ENCODE measurements at regions of chr6 and their contacts with region 1.

Region 1: DNA sequence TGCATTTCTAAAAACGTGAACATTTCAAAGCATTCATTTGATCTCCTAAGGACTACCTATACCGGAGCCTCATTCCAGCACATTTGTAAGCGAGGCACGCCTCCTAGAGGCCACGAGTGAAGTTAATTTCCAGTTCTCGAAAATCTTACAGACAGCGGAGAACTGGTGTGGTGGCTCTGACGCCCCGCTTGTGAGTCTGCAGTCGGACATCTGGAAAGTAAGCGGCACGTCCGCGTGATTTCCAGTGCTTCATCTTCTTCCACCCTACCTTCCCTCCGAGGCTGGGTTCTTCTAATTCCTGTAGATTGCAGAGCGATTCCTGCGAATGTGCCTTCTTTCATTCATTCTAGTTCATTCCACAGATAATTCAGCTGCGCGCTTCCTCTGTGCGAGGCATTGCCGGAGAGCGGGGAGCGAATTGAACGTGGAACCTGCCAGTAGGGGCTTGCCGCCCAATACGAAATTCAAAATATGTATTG is 810 bp upstream of the PRIM2 start:
- DNase-seq: peak; percentile 66
- ATAC-seq: peak; percentile 86
- H3K4me3 Mint-ChIP-seq: peak overlapping the region; percentile 97
- H3K27ac Mint-ChIP-seq: peak overlapping the region; percentile 89
- H3K4me1 Mint-ChIP-seq: peaks cover 18% of the 10 kb centered on the region
- H3K27me3 Mint-ChIP-seq: peaks cover 9% of the 10 kb centered on the region
- CTCF ChIP-seq: peak; percentile 40

Region 2: DNA sequence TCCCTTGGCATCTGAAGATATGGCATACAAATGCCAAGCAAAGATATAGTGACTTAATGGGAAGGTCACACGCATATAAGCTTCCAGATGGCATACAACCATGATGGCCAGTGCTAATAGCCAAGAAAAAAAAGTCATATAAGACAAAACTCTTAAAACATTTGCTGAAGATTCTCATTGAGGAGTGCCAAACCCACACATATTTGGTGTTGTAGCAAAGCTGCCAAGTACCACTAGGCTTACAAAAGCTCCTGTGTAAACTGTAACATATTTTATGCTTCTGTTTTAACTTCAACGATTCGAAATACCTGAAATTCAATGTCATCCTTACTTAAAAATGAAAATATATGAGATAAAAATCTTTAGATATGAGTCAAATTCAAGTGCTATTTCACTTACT is 1860.6 kb before region 1 on chr6:
- CTCF ChIA-PET with region 1: no interaction called
- POLR2A ChIA-PET with region 1: no interaction called
- intact Hi-C with region 1: no loop called
- DNase-seq: no peak
- ATAC-seq: no peak
- H3K4me3 Mint-ChIP-seq: no peak overlapping the region
- H3K27ac Mint-ChIP-seq: no peak overlapping the region
- H3K4me1 Mint-ChIP-seq: no peaks in the 10 kb centered on the region
- H3K27me3 Mint-ChIP-seq: no peaks in the 10 kb centered on the region
- CTCF ChIP-seq: no peak

Region 3: GRCh38 chr6:56359201-56359899 is 957.3 kb before region 1 on chr6:
- CTCF ChIA-PET with region 1: no interaction called
- POLR2A ChIA-PET with region 1: no interaction called
- intact Hi-C with region 1: loop called (anchors 1 kb)
- DNase-seq: no peak
- ATAC-seq: peak; percentile 85
- H3K4me3 Mint-ChIP-seq: no peak overlapping the region
- H3K27ac Mint-ChIP-seq: no peak overlapping the region
- H3K4me1 Mint-ChIP-seq: no peaks in the 10 kb centered on the region
- H3K27me3 Mint-ChIP-seq: no peaks in the 10 kb centered on the region
- CTCF ChIP-seq: peak; percentile 85

Region 4: GRCh38 chr6:56708810-56709597 is 607.6 kb before region 1 on chr6:
- CTCF ChIA-PET with region 1: no interaction called
- POLR2A ChIA-PET with region 1: no interaction called
- intact Hi-C with region 1: loop called (anchors 2 kb)
- DNase-seq: no peak
- ATAC-seq: no peak
- H3K4me3 Mint-ChIP-seq: no peak overlapping the region
- H3K27ac Mint-ChIP-seq: no peak overlapping the region
- H3K4me1 Mint-ChIP-seq: no peaks in the 10 kb centered on the region
- H3K27me3 Mint-ChIP-seq: no peaks in the 10 kb centered on the region
- CTCF ChIP-seq: no peak

Region 5: DNA sequence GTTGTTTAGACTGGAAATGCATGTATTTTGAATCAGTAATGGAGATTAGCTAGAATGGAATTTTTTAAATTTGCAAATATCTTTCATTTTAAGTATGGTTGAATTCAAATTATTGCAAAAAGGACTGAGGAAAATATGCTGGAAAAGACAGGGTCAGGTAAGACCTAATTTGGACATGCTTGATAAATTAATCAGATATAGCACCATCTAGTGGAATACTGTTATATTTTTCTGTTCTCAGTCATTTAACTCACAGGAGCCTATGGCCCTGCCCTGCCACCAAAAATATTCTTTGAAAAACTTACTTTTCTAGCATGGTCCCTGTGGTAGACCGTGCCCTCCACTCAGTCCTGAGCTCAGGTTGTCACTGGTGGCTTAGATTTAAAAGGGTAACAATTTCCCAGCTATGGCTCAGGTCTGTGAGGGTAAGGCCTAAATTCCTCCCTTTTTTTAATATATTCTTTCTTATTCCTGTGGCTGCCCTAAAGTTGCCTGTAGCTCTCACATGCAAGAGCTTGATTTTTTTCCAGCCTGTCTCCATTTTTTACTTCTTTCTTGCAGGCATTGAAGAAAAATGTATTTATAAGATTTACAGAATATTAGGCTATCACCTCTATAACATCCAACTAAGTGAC is 295.4 kb before region 1 on chr6:
- CTCF ChIA-PET with region 1: no interaction called
- POLR2A ChIA-PET with region 1: no interaction called
- intact Hi-C with region 1: loop called (anchors 2 kb)
- DNase-seq: no peak
- ATAC-seq: peak; percentile 40
- H3K4me3 Mint-ChIP-seq: no peak overlapping the region
- H3K27ac Mint-ChIP-seq: no peak overlapping the region
- H3K4me1 Mint-ChIP-seq: no peaks in the 10 kb centered on the region
- H3K27me3 Mint-ChIP-seq: peaks cover 3% of the 10 kb centered on the region
- CTCF ChIP-seq: no peak

Region 6: GRCh38 chr6:57108691-57109090 is 207.9 kb before region 1 on chr6:
- CTCF ChIA-PET with region 1: no interaction called
- POLR2A ChIA-PET with region 1: no interaction called
- intact Hi-C with region 1: loop called (anchors 1 kb)
- DNase-seq: no peak
- ATAC-seq: peak; percentile 86
- H3K4me3 Mint-ChIP-seq: peak overlapping the region; percentile 16
- H3K27ac Mint-ChIP-seq: peak overlapping the region; percentile 59
- H3K4me1 Mint-ChIP-seq: peaks cover 43% of the 10 kb centered on the region
- H3K27me3 Mint-ChIP-seq: no peaks in the 10 kb centered on the region
- CTCF ChIP-seq: no peak

Region 7: DNA sequence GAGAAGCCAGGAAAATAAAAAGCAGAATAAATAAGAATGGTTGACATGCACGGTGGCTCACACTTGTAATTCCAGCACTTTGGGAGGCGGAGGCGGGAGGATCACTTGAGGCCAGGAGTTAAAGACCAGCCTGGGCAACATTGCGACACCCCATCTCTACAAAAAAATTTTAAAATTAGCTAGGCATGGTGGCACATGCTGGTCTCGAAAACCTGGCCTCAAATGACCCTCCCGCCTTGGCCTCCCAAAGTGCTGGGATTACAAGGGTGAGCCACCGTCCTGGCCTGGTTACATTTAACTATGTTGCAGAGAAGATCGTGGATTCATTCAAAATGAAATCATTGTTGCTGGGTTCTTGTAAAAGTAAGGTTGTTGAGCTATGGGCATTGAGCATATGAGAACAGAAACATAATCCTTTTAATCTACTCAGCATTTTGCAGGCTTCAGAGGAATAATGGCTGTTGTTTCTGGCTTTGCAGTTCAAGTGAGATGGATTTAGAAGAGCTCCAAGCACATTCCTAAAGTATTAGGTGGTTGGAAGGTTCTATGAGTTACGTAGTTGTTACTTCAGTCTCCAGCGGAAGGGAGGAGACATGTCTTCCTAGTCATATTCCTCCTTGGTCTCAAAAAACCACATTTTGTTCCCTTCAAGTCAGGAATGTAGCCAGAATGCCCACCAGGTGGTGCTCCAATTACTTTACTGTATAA is 48.9 kb before region 1 on chr6:
- CTCF ChIA-PET with region 1: interaction called, 23 read pairs
- POLR2A ChIA-PET with region 1: no interaction called
- intact Hi-C with region 1: loop called (anchors 1 kb)
- DNase-seq: no peak
- ATAC-seq: no peak
- H3K4me3 Mint-ChIP-seq: no peak overlapping the region
- H3K27ac Mint-ChIP-seq: no peak overlapping the region
- H3K4me1 Mint-ChIP-seq: no peaks in the 10 kb centered on the region
- H3K27me3 Mint-ChIP-seq: peaks cover 9% of the 10 kb centered on the region
- CTCF ChIP-seq: no peak